GM12878 (cell line): ENCODE measurements at regions of chr18 and their contacts with region 1.

Region 1: DNA sequence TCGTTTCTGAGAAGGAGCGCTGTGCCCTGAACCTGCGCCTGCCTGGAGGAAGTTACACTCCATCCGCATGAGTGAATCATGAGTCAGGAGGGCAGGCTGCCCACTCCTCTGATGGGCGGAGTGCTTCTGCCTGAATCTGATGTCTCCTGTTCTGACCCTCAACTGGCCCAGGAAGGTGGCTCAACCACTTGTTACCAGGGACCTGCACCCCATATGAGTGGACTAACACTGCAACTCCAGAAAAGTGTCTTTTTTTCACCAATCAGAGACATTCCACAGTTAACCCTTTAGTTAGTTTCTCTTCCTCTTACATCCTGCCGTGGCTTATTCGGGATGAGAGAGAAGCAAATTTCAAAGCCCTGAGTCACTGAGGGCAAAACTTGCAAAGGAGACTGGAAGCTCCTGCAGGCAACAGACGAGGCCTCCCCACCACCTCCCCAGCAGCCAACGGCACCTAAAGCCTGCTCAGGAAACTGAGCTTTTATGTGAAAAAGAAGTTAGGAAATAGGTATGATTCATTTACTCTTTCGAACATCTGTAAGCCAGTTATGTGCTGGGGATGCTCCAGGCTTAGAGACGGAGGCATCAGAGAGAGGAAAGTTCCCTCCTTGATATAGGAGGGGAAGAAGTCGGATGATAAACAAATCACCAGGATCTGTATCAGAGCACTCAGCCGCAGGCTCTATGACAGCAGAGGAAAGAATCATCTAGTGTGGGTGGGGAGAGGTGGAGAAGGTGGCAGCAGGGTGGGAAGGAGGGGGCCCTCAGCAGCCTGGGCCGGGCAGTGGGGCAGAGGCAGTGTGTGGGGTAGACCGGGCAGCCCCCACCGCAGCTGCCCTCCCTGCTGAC is 30.9 kb downstream of the MBP start:
- DNase-seq: peak; percentile 61
- ATAC-seq: peak; percentile 86
- H3K4me3 ChIP-seq: peak overlapping the region; percentile 56
- H3K27ac ChIP-seq: peak overlapping the region; percentile 99
- H3K4me1 ChIP-seq: peaks cover 80% of the 10 kb centered on the region
- H3K27me3 ChIP-seq: no peaks in the 10 kb centered on the region
- CTCF ChIP-seq: no peak
- EP300 ChIP-seq: 0 out of 4 replicates have a peak, but pooled peaks of 1 of the 2 experiments have one; percentile 52
- POLR2A ChIP-seq: peak; percentile 56
- RAD21 ChIP-seq: no peak

Region 2: GRCh38 chr18:76953583-76954233 is 147.9 kb before region 1 on chr18:
- CTCF ChIA-PET with region 1: no interaction called
- POLR2A ChIA-PET with region 1: no interaction called
- RAD21 ChIA-PET with region 1: no interaction called
- SMC1A ChIA-PET with region 1: no interaction called
- in situ Hi-C with region 1: no loop called
- intact Hi-C with region 1: no loop called
- DNase-seq: no peak
- ATAC-seq: no peak
- H3K4me3 ChIP-seq: no peak overlapping the region
- H3K27ac ChIP-seq: no peak overlapping the region
- H3K4me1 ChIP-seq: no peaks in the 10 kb centered on the region
- H3K27me3 ChIP-seq: no peaks in the 10 kb centered on the region
- CTCF ChIP-seq: no peak
- EP300 ChIP-seq: no peak
- POLR2A ChIP-seq: no peak
- RAD21 ChIP-seq: no peak

Region 3: GRCh38 chr18:76994086-76994654 is 107.5 kb before region 1 on chr18:
- CTCF ChIA-PET with region 1: no interaction called
- POLR2A ChIA-PET with region 1: no interaction called
- RAD21 ChIA-PET with region 1: no interaction called
- SMC1A ChIA-PET with region 1: no interaction called
- in situ Hi-C with region 1: no loop called
- intact Hi-C with region 1: no loop called
- DNase-seq: no peak
- ATAC-seq: no peak
- H3K4me3 ChIP-seq: no peak overlapping the region
- H3K27ac ChIP-seq: no peak overlapping the region
- H3K4me1 ChIP-seq: peaks cover 9% of the 10 kb centered on the region; the same call in 1 of the 2 replicates
- H3K27me3 ChIP-seq: no peaks in the 10 kb centered on the region
- CTCF ChIP-seq: no peak
- EP300 ChIP-seq: no peak
- POLR2A ChIP-seq: no peak
- RAD21 ChIP-seq: no peak

Region 4: GRCh38 chr18:77023102-77023782 is 78.4 kb before region 1 on chr18:
- CTCF ChIA-PET with region 1: no interaction called
- POLR2A ChIA-PET with region 1: no interaction called
- RAD21 ChIA-PET with region 1: no interaction called
- SMC1A ChIA-PET with region 1: no interaction called
- in situ Hi-C with region 1: no loop called
- intact Hi-C with region 1: no loop called
- DNase-seq: no peak
- ATAC-seq: no peak; the same call in 2 of the 3 replicates
- H3K4me3 ChIP-seq: no peak overlapping the region
- H3K27ac ChIP-seq: no peak overlapping the region
- H3K4me1 ChIP-seq: no peaks in the 10 kb centered on the region
- H3K27me3 ChIP-seq: no peaks in the 10 kb centered on the region
- CTCF ChIP-seq: no peak
- EP300 ChIP-seq: no peak
- POLR2A ChIP-seq: no peak
- RAD21 ChIP-seq: no peak

Region 5: GRCh38 chr18:77054606-77055428 is 46.8 kb before region 1 on chr18:
- CTCF ChIA-PET with region 1: interaction called, 5 read pairs
- POLR2A ChIA-PET with region 1: interaction called, 3 read pairs
- RAD21 ChIA-PET with region 1: interaction called, 4 read pairs
- SMC1A ChIA-PET with region 1: interaction called, 23 read pairs
- in situ Hi-C with region 1: no loop called
- intact Hi-C with region 1: no loop called
- DNase-seq: peak; percentile 80
- ATAC-seq: peak; percentile 93
- H3K4me3 ChIP-seq: peak overlapping the region; percentile 53
- H3K27ac ChIP-seq: peak overlapping the region; percentile 88
- H3K4me1 ChIP-seq: peaks cover 46% of the 10 kb centered on the region
- H3K27me3 ChIP-seq: no peaks in the 10 kb centered on the region
- CTCF ChIP-seq: peak; percentile 73 to 78 (median 75)
- EP300 ChIP-seq: peak; percentile 70 to 74
- POLR2A ChIP-seq: no peak; the same call in 1 of the 2 replicates
- RAD21 ChIP-seq: peak; percentile 58

Region 6: DNA sequence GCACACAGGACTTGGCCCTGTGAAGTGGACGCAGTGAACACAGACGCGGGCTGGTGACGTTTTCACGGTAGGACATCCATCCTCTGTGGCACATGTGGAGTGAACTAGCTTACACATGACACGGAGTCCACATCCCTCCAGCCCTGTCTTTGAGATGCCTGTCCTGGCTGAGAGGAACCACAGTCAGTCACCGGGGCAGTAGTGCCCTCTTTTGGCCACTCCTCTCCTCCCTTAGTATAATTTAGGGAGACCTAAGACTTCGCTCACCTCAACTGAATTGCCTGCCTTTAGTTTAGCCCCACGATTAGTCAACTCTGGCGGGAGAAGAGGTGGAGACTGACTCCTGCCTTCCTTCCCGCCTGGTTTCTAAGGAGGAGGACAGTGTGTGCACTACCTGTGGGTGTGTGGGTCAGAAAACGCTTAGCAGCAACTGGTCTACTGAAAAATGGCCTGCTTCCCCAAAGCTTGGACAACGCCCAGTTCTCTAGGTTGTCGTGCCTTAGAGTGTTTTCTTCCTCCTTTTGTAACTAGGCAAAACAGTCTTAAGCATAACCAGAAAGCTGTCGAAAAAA is 39.6 kb before region 1 on chr18:
- CTCF ChIA-PET with region 1: interaction called, 13 read pairs
- POLR2A ChIA-PET with region 1: interaction called, 7 read pairs
- RAD21 ChIA-PET with region 1: interaction called, 12 read pairs
- SMC1A ChIA-PET with region 1: interaction called, 23 read pairs
- in situ Hi-C with region 1: no loop called
- intact Hi-C with region 1: loop called (anchors 1 kb)
- DNase-seq: no peak
- ATAC-seq: peak; percentile 65
- H3K4me3 ChIP-seq: peak overlapping the region; percentile 2; the same call in 1 of the 2 replicates
- H3K27ac ChIP-seq: peak overlapping the region; percentile 97
- H3K4me1 ChIP-seq: peaks cover 61% of the 10 kb centered on the region
- H3K27me3 ChIP-seq: no peaks in the 10 kb centered on the region
- CTCF ChIP-seq: peak in 2 of 3 experiments; percentile 16 to 26; a peak in 2 of 6 replicates
- EP300 ChIP-seq: no peak
- POLR2A ChIP-seq: no peak; the same call in 1 of the 2 replicates
- RAD21 ChIP-seq: peak; percentile 24; the same call in 1 of the 2 replicates

Region 7: DNA sequence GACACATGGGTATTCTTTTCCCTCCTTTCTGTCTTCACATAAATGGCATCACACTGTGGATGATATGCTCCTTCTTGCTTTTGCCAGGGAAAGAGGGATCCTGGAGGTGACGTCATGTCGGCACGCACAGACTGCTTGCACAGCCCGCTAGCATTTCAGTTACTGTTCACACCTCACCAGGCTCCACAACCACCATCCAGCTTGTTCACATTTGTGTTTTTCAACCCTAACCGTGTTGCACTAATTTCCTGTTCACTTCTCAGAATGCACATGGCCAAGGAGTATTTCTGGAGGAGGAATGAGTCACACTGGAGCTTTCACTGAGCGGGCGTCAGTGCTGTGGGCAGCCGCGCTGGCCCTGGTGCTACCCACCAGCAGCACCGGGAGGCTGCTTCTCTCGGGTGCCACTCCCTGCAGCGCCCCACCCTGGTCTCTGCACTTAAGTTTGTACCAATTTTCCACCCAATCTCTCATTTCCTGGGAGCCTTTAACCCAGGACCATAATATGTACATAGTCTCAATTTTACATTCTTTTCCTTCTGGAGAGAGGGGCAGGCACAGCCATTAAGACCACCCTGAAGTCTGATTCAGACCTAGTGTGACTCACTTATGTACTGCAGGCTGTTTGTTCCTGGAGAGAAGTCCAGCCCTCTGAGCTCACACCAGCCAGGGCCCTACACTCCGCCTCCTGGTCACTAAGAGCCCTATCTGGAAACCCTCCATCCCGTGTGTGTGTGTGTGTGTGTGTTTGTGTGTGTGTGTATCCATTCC is 34.2 kb before region 1 on chr18:
- CTCF ChIA-PET with region 1: interaction called, 13 read pairs
- POLR2A ChIA-PET with region 1: interaction called, 7 read pairs
- RAD21 ChIA-PET with region 1: interaction called, 12 read pairs
- SMC1A ChIA-PET with region 1: interaction called, 18 read pairs
- in situ Hi-C with region 1: no loop called
- intact Hi-C with region 1: loop called (anchors 1 kb)
- DNase-seq: peak; percentile 59
- ATAC-seq: peak; percentile 68
- H3K4me3 ChIP-seq: peak overlapping the region; percentile 23; the same call in 1 of the 2 replicates
- H3K27ac ChIP-seq: peak overlapping the region; percentile 97
- H3K4me1 ChIP-seq: peaks cover 71% of the 10 kb centered on the region
- H3K27me3 ChIP-seq: no peaks in the 10 kb centered on the region
- CTCF ChIP-seq: peak; percentile 15 to 18 (median 16); a peak in 2 of 6 replicates
- EP300 ChIP-seq: no peak
- POLR2A ChIP-seq: no peak
- RAD21 ChIP-seq: no peak

Region 8: GRCh38 chr18:77114415-77115191 is 13.0 kb after region 1 on chr18:
- CTCF ChIA-PET with region 1: interaction called, 9 read pairs
- POLR2A ChIA-PET with region 1: interaction called, 20 read pairs
- RAD21 ChIA-PET with region 1: interaction called, 7 read pairs
- SMC1A ChIA-PET with region 1: interaction called, 22 read pairs
- in situ Hi-C with region 1: no loop called
- intact Hi-C with region 1: no loop called
- DNase-seq: no peak
- ATAC-seq: peak; percentile 92
- H3K4me3 ChIP-seq: no peak overlapping the region
- H3K27ac ChIP-seq: no peak overlapping the region; the same call in 1 of the 2 replicates
- H3K4me1 ChIP-seq: peaks cover 4% of the 10 kb centered on the region
- H3K27me3 ChIP-seq: no peaks in the 10 kb centered on the region
- CTCF ChIP-seq: no peak
- EP300 ChIP-seq: no peak
- POLR2A ChIP-seq: peak; percentile 8; the same call in 1 of the 2 replicates
- RAD21 ChIP-seq: no peak

Region 9: DNA sequence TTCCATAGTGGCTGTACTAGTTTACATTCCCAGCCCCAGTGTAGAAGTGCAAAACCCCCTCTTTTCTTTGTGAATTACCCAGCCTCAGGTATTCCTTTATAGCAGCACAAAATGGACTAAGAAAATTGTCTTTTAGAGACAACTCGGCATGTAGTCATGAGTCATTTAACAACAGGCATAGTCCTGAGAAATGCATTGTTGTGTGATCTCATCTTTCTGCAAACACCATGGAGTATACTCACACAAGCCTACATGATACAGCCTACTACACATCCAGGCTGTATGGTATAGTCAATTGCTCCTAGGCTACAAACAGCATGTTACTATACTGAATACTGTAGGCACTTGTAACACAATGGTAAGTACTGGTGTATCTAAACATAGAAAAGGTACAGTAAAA is 75.4 kb after region 1 on chr18:
- CTCF ChIA-PET with region 1: no interaction called
- POLR2A ChIA-PET with region 1: no interaction called
- RAD21 ChIA-PET with region 1: no interaction called
- SMC1A ChIA-PET with region 1: no interaction called
- in situ Hi-C with region 1: no loop called
- intact Hi-C with region 1: no loop called
- DNase-seq: no peak
- ATAC-seq: no peak
- H3K4me3 ChIP-seq: no peak overlapping the region
- H3K27ac ChIP-seq: no peak overlapping the region
- H3K4me1 ChIP-seq: no peaks in the 10 kb centered on the region
- H3K27me3 ChIP-seq: no peaks in the 10 kb centered on the region
- CTCF ChIP-seq: no peak
- EP300 ChIP-seq: no peak
- POLR2A ChIP-seq: no peak
- RAD21 ChIP-seq: no peak